Breast epithelium (tissue), 4 donors: ENCODE measurements at regions of chr11 and their contacts with region 1.

Region 1: DNA sequence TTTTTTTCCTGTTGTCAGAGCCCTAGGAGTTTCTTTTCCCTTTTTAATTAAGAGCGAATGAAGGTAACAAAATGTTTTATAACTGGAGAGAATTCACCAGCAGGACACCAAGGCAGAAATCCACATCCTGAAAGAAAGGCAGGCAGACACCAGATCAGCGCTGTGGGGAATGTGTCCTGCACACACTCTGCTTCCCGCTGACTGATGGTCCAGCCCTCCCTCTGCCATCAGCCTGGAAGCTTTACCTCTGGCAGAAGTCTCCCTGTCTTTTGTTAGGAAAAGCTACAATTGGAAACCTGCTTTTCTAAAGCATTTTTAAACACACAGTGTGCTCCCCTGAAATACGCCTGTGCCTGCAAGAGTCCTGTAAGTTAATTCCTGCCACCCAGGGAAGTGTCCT is 638.5 kb downstream of the NTM start:
- DNase-seq: no peak
- H3K4me3 ChIP-seq: no peak overlapping the region
- H3K27ac ChIP-seq: no peak overlapping the region
- H3K4me1 ChIP-seq: no peaks in the 10 kb centered on the region
- H3K27me3 ChIP-seq: no peaks in the 10 kb centered on the region
- CTCF ChIP-seq: no peak
- POLR2A ChIP-seq: no peak

Region 2: GRCh38 chr11:131495423-131495822 is 513.4 kb before region 1 on chr11:
- intact Hi-C with region 1: no loop called
- DNase-seq: peak in 1 of 2 donors; percentile 58
- H3K4me3 ChIP-seq: no peak overlapping the region
- H3K27ac ChIP-seq: no peak overlapping the region
- H3K4me1 ChIP-seq: no peaks in the 10 kb centered on the region
- H3K27me3 ChIP-seq: no peaks in the 10 kb centered on the region
- CTCF ChIP-seq: no peak
- POLR2A ChIP-seq: no peak

Region 3: DNA sequence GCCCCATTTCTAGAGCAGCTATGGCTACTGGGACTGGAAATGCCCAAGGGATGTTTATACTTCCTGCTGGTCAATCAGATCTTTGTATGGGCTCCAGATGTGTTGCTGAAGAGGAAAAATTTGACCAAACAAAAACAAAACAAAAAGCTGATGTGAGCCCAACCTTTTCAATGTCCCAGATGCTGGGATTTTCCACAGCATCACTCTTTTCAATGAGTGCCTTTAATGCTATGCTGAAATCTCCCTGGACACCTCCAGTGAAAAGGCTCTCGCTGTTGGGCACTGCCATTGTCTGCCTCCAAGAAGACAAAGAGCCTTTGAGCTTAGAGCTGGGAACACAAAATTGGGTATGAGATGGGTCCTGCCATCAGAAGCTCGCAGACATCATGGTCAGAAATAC is 33.4 kb after region 1 on chr11:
- intact Hi-C with region 1: no loop called
- DNase-seq: no peak
- H3K4me3 ChIP-seq: no peak overlapping the region
- H3K27ac ChIP-seq: no peak overlapping the region
- H3K4me1 ChIP-seq: no peaks in the 10 kb centered on the region
- H3K27me3 ChIP-seq: no peaks in the 10 kb centered on the region
- CTCF ChIP-seq: no peak
- POLR2A ChIP-seq: no peak

Region 4: DNA sequence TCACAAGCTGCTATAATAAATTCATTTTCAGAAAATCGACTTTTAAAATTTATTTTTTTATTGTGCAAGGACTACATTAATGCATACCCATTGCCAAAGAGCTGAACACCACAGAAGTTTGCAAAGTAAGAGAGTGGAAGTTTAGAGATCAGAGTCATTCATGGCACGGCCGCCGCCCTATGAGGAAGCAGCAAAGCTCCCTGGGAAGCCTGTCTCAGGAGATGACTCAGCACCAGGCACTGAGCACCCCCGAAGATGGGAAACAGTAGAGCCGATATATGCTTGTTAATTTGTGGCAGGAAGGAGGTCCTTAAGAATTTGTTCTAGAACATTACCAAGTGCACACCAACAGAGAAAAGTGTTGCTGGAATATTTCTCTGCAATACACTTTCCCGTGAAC is 829.8 kb after region 1 on chr11:
- intact Hi-C with region 1: no loop called
- DNase-seq: no peak
- H3K4me3 ChIP-seq: no peak overlapping the region
- H3K27ac ChIP-seq: no peak overlapping the region
- H3K4me1 ChIP-seq: no peaks in the 10 kb centered on the region
- H3K27me3 ChIP-seq: no peaks in the 10 kb centered on the region
- CTCF ChIP-seq: no peak
- POLR2A ChIP-seq: no peak

Region 5: GRCh38 chr11:133082851-133083488 is 1074.1 kb after region 1 on chr11:
- intact Hi-C with region 1: loop called (anchors 10 kb)
- DNase-seq: no peak
- H3K4me3 ChIP-seq: peak overlapping the region; percentile 34 to 69 (median 45)
- H3K27ac ChIP-seq: no peak overlapping the region
- H3K4me1 ChIP-seq: no peaks in the 10 kb centered on the region
- H3K27me3 ChIP-seq: peaks cover 0 to 52% of the 10 kb centered on the region in 2 donors
- CTCF ChIP-seq: peak in 1 of 3 donors; percentile 82
- POLR2A ChIP-seq: no peak

Region 6: DNA sequence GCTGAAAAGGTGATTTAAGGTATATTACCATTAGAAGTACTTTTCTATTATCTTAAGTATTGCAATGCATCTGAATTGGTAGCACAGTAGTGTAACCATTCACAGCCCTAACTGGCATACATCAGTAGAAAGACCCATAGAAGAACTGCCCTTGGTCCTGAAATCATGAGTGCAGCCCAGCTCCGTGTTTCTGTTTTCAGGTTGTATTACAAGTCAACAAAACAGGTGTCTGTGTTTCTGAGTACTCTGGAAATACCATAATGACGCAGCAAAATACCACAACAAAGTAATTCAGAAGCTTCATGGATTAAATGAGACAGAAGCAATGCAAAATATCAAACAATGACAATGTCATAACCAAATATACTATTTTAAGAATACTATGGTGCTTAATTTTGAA is 1297.1 kb after region 1 on chr11:
- intact Hi-C with region 1: loop called (anchors 10 kb)
- DNase-seq: no peak
- H3K4me3 ChIP-seq: no peak overlapping the region
- H3K27ac ChIP-seq: no peak overlapping the region
- H3K4me1 ChIP-seq: no peaks in the 10 kb centered on the region
- H3K27me3 ChIP-seq: no peaks in the 10 kb centered on the region
- CTCF ChIP-seq: no peak
- POLR2A ChIP-seq: no peak

Region 7: DNA sequence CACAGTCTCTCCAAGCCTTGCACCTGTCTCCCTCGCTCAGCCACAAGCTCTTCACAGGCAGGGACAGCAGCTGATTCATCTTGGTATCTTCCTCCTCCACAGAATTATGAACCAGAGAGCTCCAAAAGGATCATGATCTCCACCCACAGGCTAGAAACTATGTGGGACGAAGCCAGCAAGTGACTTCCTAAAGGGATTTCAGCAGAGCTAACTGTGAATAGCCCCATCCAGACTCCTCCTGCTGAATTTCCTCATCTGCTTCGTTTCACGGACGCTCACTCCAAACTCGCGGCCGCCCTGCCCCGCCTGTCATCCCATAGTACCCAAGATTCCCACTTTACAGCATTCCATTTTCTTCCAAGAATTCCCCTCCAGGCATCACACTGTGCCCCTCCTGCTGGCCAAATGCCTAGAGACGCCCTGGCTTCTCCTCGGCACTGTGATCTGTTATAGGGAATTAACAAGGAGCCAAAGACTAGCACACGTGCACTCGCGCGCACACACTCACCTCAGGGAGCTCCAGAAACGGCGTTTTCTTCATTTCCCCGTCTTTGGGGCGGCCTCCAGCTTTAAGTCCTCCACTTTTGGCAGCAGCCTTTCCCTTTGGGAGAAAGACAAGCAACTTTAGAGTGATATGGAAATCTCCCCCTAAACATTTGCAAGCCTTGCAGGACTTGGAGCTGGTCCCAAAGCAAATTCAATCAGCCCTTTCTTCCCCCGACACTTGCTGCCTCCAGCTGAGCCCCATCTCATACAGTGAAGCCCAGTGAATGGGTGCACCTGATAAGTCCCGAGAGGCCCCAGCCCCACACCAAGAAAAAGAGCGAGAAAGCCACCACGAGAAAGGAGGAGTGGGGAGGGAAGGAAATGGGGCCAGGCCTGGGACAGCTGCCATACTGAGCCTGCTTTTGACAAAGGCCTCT is 1801.0 kb after region 1 on chr11:
- intact Hi-C with region 1: loop called (anchors 10 kb)
- DNase-seq: peak in 1 of 2 donors; percentile 34
- H3K4me3 ChIP-seq: peak overlapping the region in 2 of 3 donors; percentile 11 to 13
- H3K27ac ChIP-seq: no peak overlapping the region
- H3K4me1 ChIP-seq: peaks cover 0 to 8% of the 10 kb centered on the region in 2 donors
- H3K27me3 ChIP-seq: peaks cover 0 to 52% of the 10 kb centered on the region in 2 donors
- CTCF ChIP-seq: no peak
- POLR2A ChIP-seq: no peak

Region 8: DNA sequence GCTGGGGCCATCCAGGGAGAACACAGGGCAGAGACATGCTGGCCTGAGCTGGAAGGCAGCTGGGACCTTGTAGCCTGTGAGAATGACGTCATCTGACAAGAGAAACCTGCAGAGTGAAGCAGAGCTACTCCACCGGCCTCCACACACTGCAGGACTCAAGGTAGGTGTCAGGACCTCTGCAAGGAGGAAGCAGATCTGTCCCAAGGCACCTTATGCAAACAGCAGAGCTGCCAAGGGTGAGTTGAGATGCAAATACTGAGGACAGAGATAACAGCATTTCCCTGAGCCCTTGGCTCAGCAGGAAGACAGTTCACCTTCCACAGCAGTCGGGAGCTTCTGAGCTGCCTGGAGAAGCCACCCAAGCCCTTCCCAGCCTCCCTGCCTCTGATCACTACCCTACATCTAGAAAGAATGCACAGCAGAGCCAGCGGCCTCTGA is 1999.8 kb after region 1 on chr11:
- intact Hi-C with region 1: no loop called
- DNase-seq: no peak
- H3K4me3 ChIP-seq: no peak overlapping the region
- H3K27ac ChIP-seq: no peak overlapping the region
- H3K4me1 ChIP-seq: no peaks in the 10 kb centered on the region
- H3K27me3 ChIP-seq: peaks cover 0 to 1% of the 10 kb centered on the region in 2 donors
- CTCF ChIP-seq: no peak
- POLR2A ChIP-seq: no peak